ENCODE measurements at regions of chr17 and their contacts with region 1.

Region 1: GRCh38 chr17:59406808-59407429 is 75.5 kb downstream of the YPEL2 start:
- DNase-seq: peak; percentile 57
- ATAC-seq: peak; percentile 79
- H3K4me3 ChIP-seq: no peak overlapping the region
- H3K27ac ChIP-seq: no peak overlapping the region
- H3K4me1 ChIP-seq: no peaks in the 10 kb centered on the region
- H3K27me3 ChIP-seq: no peaks in the 10 kb centered on the region
- CTCF ChIP-seq: no peak
- POLR2A ChIP-seq: no peak
- RAD21 ChIP-seq: no peak

Region 2: GRCh38 chr17:59361916-59362810 is 44.8 kb before region 1 on chr17:
- CTCF ChIA-PET with region 1: interaction called, 4 read pairs
- POLR2A ChIA-PET with region 1: no interaction called
- dilution Hi-C with region 1: no loop called
- in situ Hi-C with region 1: no loop called
- intact Hi-C with region 1: loop called (anchors 5 kb)
- DNase-seq: peak; percentile 93
- ATAC-seq: peak; percentile 83
- H3K4me3 ChIP-seq: no peak overlapping the region
- H3K27ac ChIP-seq: peak overlapping the region; percentile 78; the same call in 1 of the 2 replicates
- H3K4me1 ChIP-seq: peaks cover 35% of the 10 kb centered on the region
- H3K27me3 ChIP-seq: no peaks in the 10 kb centered on the region
- CTCF ChIP-seq: no peak
- POLR2A ChIP-seq: no peak
- RAD21 ChIP-seq: no peak

Region 3: DNA sequence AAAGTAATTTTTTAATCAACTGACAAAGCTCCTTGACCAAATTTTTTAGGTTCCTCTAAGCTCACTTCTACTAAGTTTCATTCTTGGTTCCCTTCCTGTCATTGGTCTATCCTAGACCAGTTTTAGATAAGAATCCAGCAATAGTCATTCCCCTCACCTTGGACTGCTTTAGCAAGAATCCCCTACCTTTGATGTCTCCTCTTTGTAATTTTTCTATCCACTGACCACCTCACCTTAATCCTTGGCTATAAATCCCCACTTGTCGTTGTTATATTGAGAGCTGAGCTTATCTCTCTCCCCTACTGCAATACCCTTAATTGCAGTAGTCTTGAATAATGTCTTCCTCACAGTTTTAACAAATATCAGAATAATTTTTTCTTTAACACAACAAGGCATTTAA is 877.8 kb after region 1 on chr17:
- CTCF ChIA-PET with region 1: no interaction called
- POLR2A ChIA-PET with region 1: no interaction called
- dilution Hi-C with region 1: no loop called
- in situ Hi-C with region 1: no loop called
- intact Hi-C with region 1: no loop called
- DNase-seq: no peak
- ATAC-seq: no peak
- H3K4me3 ChIP-seq: no peak overlapping the region
- H3K27ac ChIP-seq: no peak overlapping the region
- H3K4me1 ChIP-seq: no peaks in the 10 kb centered on the region
- H3K27me3 ChIP-seq: no peaks in the 10 kb centered on the region
- CTCF ChIP-seq: no peak
- POLR2A ChIP-seq: no peak
- RAD21 ChIP-seq: no peak